CD8-positive, alpha-beta memory T cell (primary cell): ENCODE measurements at regions of chr10 and their contacts with region 1.

Region 1: GRCh38 chr10:27155066-27155754 is at the start of gene MASTL:
- DNase-seq: peak; percentile 93 to 98 (median 95)
- H3K4me3 ChIP-seq: peak within 1 kb of the TSS; percentile 97
- H3K4me3 Mint-ChIP-seq: peak within 1 kb of the TSS; percentile 97 to 100 (median 99)
- H3K27ac ChIP-seq: peak within 1 kb of the TSS; percentile 99
- H3K27ac Mint-ChIP-seq: peak within 1 kb of the TSS; percentile 99 to 100 (median 100)
- H3K4me1 ChIP-seq: peaks cover 31% of the 10 kb centered on the region
- H3K4me1 Mint-ChIP-seq: peaks cover 43 to 66% (median 62%) of the 10 kb centered on the region in 3 donors
- H3K27me3 ChIP-seq: no peaks in the 10 kb centered on the region
- H3K27me3 Mint-ChIP-seq: peaks cover 0 to 9% of the 10 kb centered on the region in 2 donors
- total RNA-seq, gene MASTL: 22.6 to 22.8 TPM

Region 2: GRCh38 chr10:27041196-27041595 is 114.0 kb before region 1 on chr10:
- CTCF ChIA-PET with region 1: no interaction called
- POLR2A ChIA-PET with region 1: no interaction called
- DNase-seq: no peak
- H3K4me3 ChIP-seq: no peak overlapping the region
- H3K4me3 Mint-ChIP-seq: no peak overlapping the region
- H3K27ac ChIP-seq: no peak overlapping the region
- H3K27ac Mint-ChIP-seq: no peak overlapping the region
- H3K4me1 ChIP-seq: no peaks in the 10 kb centered on the region
- H3K4me1 Mint-ChIP-seq: no peaks in the 10 kb centered on the region
- H3K27me3 ChIP-seq: no peaks in the 10 kb centered on the region
- H3K27me3 Mint-ChIP-seq: no peaks in the 10 kb centered on the region

Region 3: GRCh38 chr10:27241652-27242472 is 86.7 kb after region 1 on chr10:
- CTCF ChIA-PET with region 1: interaction called, 8 read pairs
- POLR2A ChIA-PET with region 1: interaction called, 33 read pairs
- DNase-seq: peak; percentile 82 to 91 (median 84)
- H3K4me3 ChIP-seq: peak overlapping the region; percentile 93
- H3K4me3 Mint-ChIP-seq: peak overlapping the region; percentile 89 to 99 (median 93)
- H3K27ac ChIP-seq: peak overlapping the region; percentile 91
- H3K27ac Mint-ChIP-seq: peak overlapping the region; percentile 95 to 99 (median 97)
- H3K4me1 ChIP-seq: peaks cover 18% of the 10 kb centered on the region
- H3K4me1 Mint-ChIP-seq: peaks cover 35 to 54% (median 51%) of the 10 kb centered on the region in 3 donors
- H3K27me3 ChIP-seq: no peaks in the 10 kb centered on the region
- H3K27me3 Mint-ChIP-seq: peaks cover 0 to 4% of the 10 kb centered on the region in 2 donors

Region 4: GRCh38 chr10:27504007-27504807 is 349.0 kb after region 1 on chr10 and contains the start of gene RAB18:
- CTCF ChIA-PET with region 1: no interaction called
- POLR2A ChIA-PET with region 1: interaction called, 12 read pairs
- DNase-seq: peak; percentile 97 to 100 (median 98)
- H3K4me3 ChIP-seq: peak within 1 kb of the TSS; percentile 66
- H3K4me3 Mint-ChIP-seq: peak within 1 kb of the TSS; percentile 95 to 100 (median 99)
- H3K27ac ChIP-seq: peak within 1 kb of the TSS; percentile 90
- H3K27ac Mint-ChIP-seq: peak within 1 kb of the TSS; percentile 97 to 99 (median 99)
- H3K4me1 ChIP-seq: peaks cover 37% of the 10 kb centered on the region
- H3K4me1 Mint-ChIP-seq: peaks cover 48 to 58% (median 57%) of the 10 kb centered on the region in 3 donors
- H3K27me3 ChIP-seq: no peaks in the 10 kb centered on the region
- H3K27me3 Mint-ChIP-seq: peaks cover 0 to 8% of the 10 kb centered on the region in 2 donors
- total RNA-seq, gene RAB18: 68.2 to 71.1 TPM

Region 5: DNA sequence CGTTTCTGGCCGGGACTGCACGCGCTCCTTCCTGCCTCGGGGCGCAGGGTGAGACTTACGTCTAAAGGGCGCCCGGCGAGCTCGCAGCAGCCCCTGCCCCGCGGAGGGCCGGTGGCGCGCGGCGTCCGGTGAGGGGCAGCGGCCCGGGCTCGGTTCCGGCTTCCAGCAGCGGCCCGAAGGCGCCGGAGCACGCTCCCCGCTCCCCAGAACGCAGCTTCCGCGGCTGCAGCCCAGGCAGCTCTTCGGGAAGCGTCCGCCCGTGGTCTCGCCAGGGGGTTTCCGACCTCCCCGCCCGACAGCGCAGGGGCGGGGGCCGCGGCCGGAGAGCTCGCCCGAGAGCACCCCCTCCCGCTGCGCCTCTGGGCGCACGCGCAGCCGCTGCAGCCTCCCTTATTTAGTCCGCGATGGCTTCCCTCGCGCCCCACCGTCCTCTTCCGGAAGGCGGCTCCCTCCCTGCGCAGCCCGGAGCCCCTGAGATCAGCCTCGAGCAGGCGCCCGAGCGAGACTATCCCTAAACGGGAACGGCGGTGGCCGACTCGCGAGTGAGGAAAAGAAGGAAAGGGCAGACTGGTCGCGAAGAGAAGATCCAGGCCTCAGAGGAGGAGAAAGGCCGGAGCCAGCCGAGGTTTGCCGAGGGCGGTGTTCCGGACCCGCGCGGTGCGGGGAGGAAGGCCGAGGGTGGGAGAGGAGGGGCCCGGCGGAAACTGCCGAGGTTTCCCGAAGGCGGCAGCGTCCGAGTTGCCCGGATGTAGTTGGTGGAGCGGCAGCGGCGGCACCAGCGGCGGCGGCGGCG is 1377.4 kb after region 1 on chr10 and contains the start of gene WAC:
- CTCF ChIA-PET with region 1: no interaction called
- POLR2A ChIA-PET with region 1: interaction called, 14 read pairs
- DNase-seq: peak; percentile 96 to 98 (median 96)
- H3K4me3 ChIP-seq: peak within 1 kb of the TSS; percentile 82
- H3K4me3 Mint-ChIP-seq: peak within 1 kb of the TSS; percentile 98 to 99 (median 99)
- H3K27ac ChIP-seq: peak within 1 kb of the TSS; percentile 98
- H3K27ac Mint-ChIP-seq: peak within 1 kb of the TSS; percentile 96 to 100 (median 100)
- H3K4me1 ChIP-seq: peaks cover 40% of the 10 kb centered on the region
- H3K4me1 Mint-ChIP-seq: peaks cover 56 to 82% (median 75%) of the 10 kb centered on the region in 3 donors
- H3K27me3 ChIP-seq: no peaks in the 10 kb centered on the region
- H3K27me3 Mint-ChIP-seq: peaks cover 0 to 6% of the 10 kb centered on the region in 2 donors
- total RNA-seq, gene WAC: 134 to 142 TPM